Activated CD4-positive, alpha-beta T cell treated with anti-CD3 and anti-CD28 coated beads for 36 hours (primary cell): ENCODE measurements at regions of chr4 and their contacts with region 1.

Region 1: GRCh38 chr4:190020790-190021717 is 6.0 kb downstream of the FRG2 start:
- DNase-seq: peak; percentile 55
- ATAC-seq: peak; percentile 44
- H3K4me3 Mint-ChIP-seq: peak overlapping the region; percentile 57
- H3K27ac Mint-ChIP-seq: no peak overlapping the region
- H3K4me1 Mint-ChIP-seq: peaks cover 29% of the 10 kb centered on the region
- H3K27me3 Mint-ChIP-seq: peaks cover 48% of the 10 kb centered on the region

Region 2: GRCh38 chr4:189940178-189941004 is 80.7 kb before region 1 on chr4 and contains the start of gene FRG1:
- CTCF ChIA-PET with region 1: no interaction called
- POLR2A ChIA-PET with region 1: no interaction called
- intact Hi-C with region 1: loop called in 1 of 2 experiments (anchors 5 kb)
- DNase-seq: peak; percentile 96
- ATAC-seq: peak; percentile 99
- H3K4me3 Mint-ChIP-seq: peak within 1 kb of the TSS; percentile 79
- H3K27ac Mint-ChIP-seq: peak within 1 kb of the TSS; percentile 97
- H3K4me1 Mint-ChIP-seq: peaks cover 45% of the 10 kb centered on the region
- H3K27me3 Mint-ChIP-seq: no peaks in the 10 kb centered on the region
- total RNA-seq, gene FRG1: 58.1 to 66.8 TPM